ENCODE measurements at regions of chr4 and their contacts with region 1.

Region 1: GRCh38 chr4:15649914-15650545 is 5.1 kb downstream of the FBXL5 start:
- DNase-seq: peak; percentile 11 to 83 (median 79)
- ATAC-seq: peak; percentile 92
- H3K4me3 ChIP-seq: no peak overlapping the region
- H3K4me3 Mint-ChIP-seq: peak overlapping the region; percentile 53 to 74 (median 68)
- H3K27ac ChIP-seq: no peak overlapping the region
- H3K27ac Mint-ChIP-seq: peak overlapping the region in 8 of 9 donors; percentile 9 to 71 (median 54)
- H3K4me1 ChIP-seq: peaks cover 36 to 46% of the 10 kb centered on the region in 2 donors
- H3K4me1 Mint-ChIP-seq: peaks cover 39 to 85% (median 77%) of the 10 kb centered on the region in 7 donors
- H3K27me3 ChIP-seq: no peaks in the 10 kb centered on the region
- H3K27me3 Mint-ChIP-seq: no peaks in the 10 kb centered on the region

Region 2: GRCh38 chr4:14215103-14215770 is 1434.8 kb before region 1 on chr4:
- CTCF ChIA-PET with region 1: no interaction called
- POLR2A ChIA-PET with region 1: no interaction called
- intact Hi-C with region 1: no loop called
- DNase-seq: no peak
- ATAC-seq: no peak
- H3K4me3 ChIP-seq: no peak overlapping the region
- H3K4me3 Mint-ChIP-seq: no peak overlapping the region
- H3K27ac ChIP-seq: no peak overlapping the region
- H3K27ac Mint-ChIP-seq: no peak overlapping the region
- H3K4me1 ChIP-seq: no peaks in the 10 kb centered on the region
- H3K4me1 Mint-ChIP-seq: no peaks in the 10 kb centered on the region
- H3K27me3 ChIP-seq: no peaks in the 10 kb centered on the region
- H3K27me3 Mint-ChIP-seq: peaks cover 0 to 13% (median 0%) of the 10 kb centered on the region in 5 donors

Region 3: GRCh38 chr4:15231265-15232091 is 418.6 kb before region 1 on chr4:
- CTCF ChIA-PET with region 1: interaction called, 4 read pairs
- POLR2A ChIA-PET with region 1: interaction called, 3 read pairs
- intact Hi-C with region 1: loop called (anchors 1 kb)
- DNase-seq: peak; percentile 45 to 72 (median 69)
- ATAC-seq: peak; percentile 86
- H3K4me3 ChIP-seq: no peak overlapping the region
- H3K4me3 Mint-ChIP-seq: no peak overlapping the region
- H3K27ac ChIP-seq: no peak overlapping the region
- H3K27ac Mint-ChIP-seq: peak overlapping the region in 4 of 9 donors; percentile 11 to 68 (median 44)
- H3K4me1 ChIP-seq: peaks cover 0 to 27% of the 10 kb centered on the region in 2 donors
- H3K4me1 Mint-ChIP-seq: peaks cover 24 to 39% (median 35%) of the 10 kb centered on the region in 7 donors
- H3K27me3 ChIP-seq: no peaks in the 10 kb centered on the region
- H3K27me3 Mint-ChIP-seq: peaks cover 0 to 3% (median 0%) of the 10 kb centered on the region in 5 donors

Region 4: DNA sequence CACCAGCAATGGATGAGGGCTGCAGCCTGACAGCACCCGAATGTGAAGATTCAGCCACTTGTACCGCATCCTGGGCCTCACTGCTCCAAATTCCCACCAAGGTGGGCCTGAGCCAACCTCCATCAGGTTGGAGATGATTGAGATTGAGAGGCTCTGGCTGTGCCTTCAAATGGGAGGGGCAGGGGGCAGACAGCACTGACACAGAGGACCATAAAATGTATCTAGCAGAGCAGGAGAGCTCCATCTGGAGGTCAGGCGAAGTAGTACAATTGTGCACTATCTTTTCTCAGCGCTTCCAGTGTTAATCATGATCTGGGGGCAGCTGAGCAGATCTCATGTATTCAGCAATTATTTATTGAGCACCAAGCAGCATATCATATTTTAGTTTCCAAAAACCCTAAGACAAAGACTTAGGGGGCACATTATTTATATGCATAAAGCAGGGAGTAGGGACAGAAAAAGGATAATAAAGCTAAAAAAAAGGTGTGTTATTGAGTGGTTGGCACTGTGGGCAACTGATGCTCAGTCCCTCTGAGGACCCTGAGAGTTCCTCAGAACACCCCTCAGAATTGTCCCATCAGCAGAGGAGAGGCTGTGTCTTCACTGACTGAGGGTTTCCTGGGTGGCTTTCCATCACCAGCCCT is 253.8 kb before region 1 on chr4:
- CTCF ChIA-PET with region 1: no interaction called
- POLR2A ChIA-PET with region 1: no interaction called
- intact Hi-C with region 1: loop called (anchors 2 to 5 kb)
- DNase-seq: peak in 7 of 9 donors; percentile 31 to 57 (median 50)
- ATAC-seq: peak; percentile 85
- H3K4me3 ChIP-seq: no peak overlapping the region
- H3K4me3 Mint-ChIP-seq: no peak overlapping the region
- H3K27ac ChIP-seq: no peak overlapping the region
- H3K27ac Mint-ChIP-seq: peak overlapping the region in 1 of 9 donors; percentile 68
- H3K4me1 ChIP-seq: peaks cover 7 to 12% of the 10 kb centered on the region in 2 donors
- H3K4me1 Mint-ChIP-seq: peaks cover 10 to 52% (median 37%) of the 10 kb centered on the region in 7 donors
- H3K27me3 ChIP-seq: no peaks in the 10 kb centered on the region
- H3K27me3 Mint-ChIP-seq: no peaks in the 10 kb centered on the region

Region 5: DNA sequence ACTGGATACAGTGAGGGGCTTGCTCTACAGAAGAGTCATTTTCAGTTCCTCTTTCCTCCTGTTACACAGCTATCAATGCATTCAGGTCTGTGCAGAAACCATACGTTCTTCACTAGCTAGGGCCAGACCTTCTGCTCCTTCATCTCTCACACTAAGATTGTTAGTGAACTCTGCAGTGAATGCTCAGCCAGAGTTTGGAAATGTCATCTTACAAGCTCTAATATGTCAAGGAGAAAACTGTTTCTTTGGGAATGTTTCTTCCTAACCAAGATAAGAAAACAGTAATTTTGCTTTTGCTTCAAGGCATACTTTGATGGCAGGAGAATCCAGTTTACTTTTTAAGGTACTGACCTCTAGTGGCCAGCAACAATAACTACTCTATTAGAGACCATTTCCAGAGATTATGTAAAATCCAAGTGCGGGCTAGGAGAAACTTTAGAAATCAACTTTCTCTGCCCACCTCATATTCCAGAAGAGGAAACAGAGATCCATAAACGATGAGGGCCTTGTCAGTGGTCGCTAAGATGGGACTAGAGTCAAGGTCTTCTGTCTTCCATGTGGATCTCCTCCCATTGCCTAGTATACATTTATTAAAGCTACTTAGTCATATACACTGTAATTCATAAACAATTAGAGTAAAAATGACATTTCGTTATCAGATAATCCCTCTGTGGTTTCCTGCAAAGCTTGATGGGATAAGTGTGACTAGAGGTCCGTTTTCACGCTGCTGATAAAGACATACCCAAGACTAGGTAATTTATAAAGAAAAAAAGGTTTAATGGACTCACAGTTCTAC is 192.4 kb before region 1 on chr4:
- CTCF ChIA-PET with region 1: interaction called, 8 read pairs
- POLR2A ChIA-PET with region 1: no interaction called
- intact Hi-C with region 1: loop called (anchors 1 kb)
- DNase-seq: peak in 6 of 9 donors; percentile 23 to 62 (median 56)
- ATAC-seq: peak; percentile 89
- H3K4me3 ChIP-seq: no peak overlapping the region
- H3K4me3 Mint-ChIP-seq: peak overlapping the region in 2 of 10 donors; percentile 3 to 17
- H3K27ac ChIP-seq: no peak overlapping the region
- H3K27ac Mint-ChIP-seq: peak overlapping the region in 3 of 9 donors; percentile 6 to 59 (median 14)
- H3K4me1 ChIP-seq: no peaks in the 10 kb centered on the region
- H3K4me1 Mint-ChIP-seq: peaks cover 0 to 12% (median 7%) of the 10 kb centered on the region in 7 donors
- H3K27me3 ChIP-seq: no peaks in the 10 kb centered on the region
- H3K27me3 Mint-ChIP-seq: peaks cover 0 to 25% (median 0%) of the 10 kb centered on the region in 5 donors

Region 6: DNA sequence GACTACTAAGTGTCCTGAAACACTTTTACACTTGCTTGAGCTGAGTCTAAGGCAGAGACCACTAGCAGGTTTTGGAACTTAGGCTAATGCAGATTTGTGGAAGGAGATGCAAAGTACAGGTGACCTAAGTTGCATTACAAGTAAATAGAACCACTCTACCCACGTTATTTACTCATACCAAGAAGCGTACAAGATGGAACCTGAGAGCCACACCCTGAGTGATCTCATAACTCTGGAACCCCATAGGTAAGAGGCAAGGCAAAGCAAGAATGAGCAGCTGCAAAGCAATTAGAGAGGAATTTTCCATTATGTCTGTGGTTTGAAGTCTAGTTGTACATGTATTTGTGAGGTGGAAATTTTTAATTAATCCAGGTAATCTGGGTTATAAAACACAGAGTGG is 125.0 kb before region 1 on chr4:
- CTCF ChIA-PET with region 1: no interaction called
- POLR2A ChIA-PET with region 1: no interaction called
- intact Hi-C with region 1: no loop called
- DNase-seq: no peak
- ATAC-seq: no peak
- H3K4me3 ChIP-seq: no peak overlapping the region
- H3K4me3 Mint-ChIP-seq: no peak overlapping the region
- H3K27ac ChIP-seq: no peak overlapping the region
- H3K27ac Mint-ChIP-seq: no peak overlapping the region
- H3K4me1 ChIP-seq: no peaks in the 10 kb centered on the region
- H3K4me1 Mint-ChIP-seq: no peaks in the 10 kb centered on the region
- H3K27me3 ChIP-seq: no peaks in the 10 kb centered on the region
- H3K27me3 Mint-ChIP-seq: no peaks in the 10 kb centered on the region

Region 7: GRCh38 chr4:15547392-15547791 is 102.6 kb before region 1 on chr4:
- CTCF ChIA-PET with region 1: no interaction called
- POLR2A ChIA-PET with region 1: no interaction called
- intact Hi-C with region 1: loop called in 1 of 2 experiments (anchors 5 kb)
- DNase-seq: peak in 7 of 9 donors; percentile 7 to 66 (median 42)
- ATAC-seq: peak; percentile 82
- H3K4me3 ChIP-seq: no peak overlapping the region
- H3K4me3 Mint-ChIP-seq: peak overlapping the region in 8 of 10 donors; percentile 7 to 59 (median 46)
- H3K27ac ChIP-seq: no peak overlapping the region
- H3K27ac Mint-ChIP-seq: peak overlapping the region in 8 of 9 donors; percentile 6 to 76 (median 42)
- H3K4me1 ChIP-seq: no peaks in the 10 kb centered on the region
- H3K4me1 Mint-ChIP-seq: peaks cover 7 to 19% (median 16%) of the 10 kb centered on the region in 7 donors
- H3K27me3 ChIP-seq: no peaks in the 10 kb centered on the region
- H3K27me3 Mint-ChIP-seq: no peaks in the 10 kb centered on the region

Region 8: GRCh38 chr4:15681207-15682015 is 31.4 kb after region 1 on chr4 and contains the start of gene FAM200B:
- CTCF ChIA-PET with region 1: interaction called, 3 read pairs
- POLR2A ChIA-PET with region 1: interaction called, 44 read pairs
- intact Hi-C with region 1: loop called (anchors 1 kb)
- DNase-seq: peak; percentile 87 to 100 (median 93)
- ATAC-seq: peak; percentile 98
- H3K4me3 ChIP-seq: peak within 1 kb of the TSS; percentile 78
- H3K4me3 Mint-ChIP-seq: peak within 1 kb of the TSS; percentile 88 to 99 (median 94)
- H3K27ac ChIP-seq: peak within 1 kb of the TSS; percentile 94
- H3K27ac Mint-ChIP-seq: peak within 1 kb of the TSS; percentile 89 to 100 (median 98)
- H3K4me1 ChIP-seq: peaks cover 5 to 11% of the 10 kb centered on the region in 2 donors
- H3K4me1 Mint-ChIP-seq: peaks cover 22 to 54% (median 42%) of the 10 kb centered on the region in 7 donors
- H3K27me3 ChIP-seq: no peaks in the 10 kb centered on the region
- H3K27me3 Mint-ChIP-seq: no peaks in the 10 kb centered on the region
- total RNA-seq, gene FAM200B: 10.6 to 42.8 (median 27.4) TPM

Region 9: GRCh38 chr4:16001484-16001858 is 351.4 kb after region 1 on chr4:
- CTCF ChIA-PET with region 1: no interaction called
- POLR2A ChIA-PET with region 1: no interaction called
- intact Hi-C with region 1: loop called in 1 of 2 experiments (anchors 5 kb)
- DNase-seq: peak in 8 of 9 donors; percentile 13 to 59 (median 47)
- ATAC-seq: peak; percentile 95
- H3K4me3 ChIP-seq: no peak overlapping the region
- H3K4me3 Mint-ChIP-seq: no peak overlapping the region
- H3K27ac ChIP-seq: no peak overlapping the region
- H3K27ac Mint-ChIP-seq: no peak overlapping the region
- H3K4me1 ChIP-seq: no peaks in the 10 kb centered on the region
- H3K4me1 Mint-ChIP-seq: no peaks in the 10 kb centered on the region
- H3K27me3 ChIP-seq: no peaks in the 10 kb centered on the region
- H3K27me3 Mint-ChIP-seq: peaks cover 0 to 8% (median 3%) of the 10 kb centered on the region in 5 donors

Measured in naive thymus-derived CD4-positive, alpha-beta T cell (primary cell).